CD4-positive, alpha-beta T cell (primary cell): ENCODE measurements at regions of chr6 and their contacts with region 1.

Region 1: GRCh38 chr6:143912671-143913070 is 48.4 kb downstream of the ZC2HC1B start:
- DNase-seq: no peak
- ATAC-seq: no peak
- H3K4me3 ChIP-seq: no peak overlapping the region
- H3K4me3 Mint-ChIP-seq: no peak overlapping the region
- H3K27ac ChIP-seq: no peak overlapping the region
- H3K27ac Mint-ChIP-seq: no peak overlapping the region
- H3K4me1 ChIP-seq: no peaks in the 10 kb centered on the region
- H3K4me1 Mint-ChIP-seq: no peaks in the 10 kb centered on the region
- H3K27me3 ChIP-seq: no peaks in the 10 kb centered on the region
- H3K27me3 Mint-ChIP-seq: no peaks in the 10 kb centered on the region
- CTCF ChIP-seq: no peak

Region 2: DNA sequence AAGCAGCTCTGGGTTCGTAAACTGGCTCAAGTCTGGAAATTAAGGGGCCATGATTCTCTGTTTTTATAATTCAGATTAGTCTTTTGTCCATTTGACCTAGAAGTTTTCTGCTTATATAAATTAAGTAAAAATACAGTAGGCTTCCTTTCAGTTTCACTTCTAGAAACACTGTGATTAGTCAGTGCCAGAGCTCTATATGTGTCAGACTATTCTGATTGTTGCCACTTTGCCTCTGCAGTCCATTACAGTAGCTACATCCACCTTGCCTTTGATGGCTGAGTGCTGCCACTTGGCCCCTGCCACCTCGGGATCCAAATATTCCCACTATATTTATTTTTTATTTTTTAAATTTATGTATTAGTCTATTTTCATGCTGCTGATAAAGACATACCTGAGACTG is 40.5 kb before region 1 on chr6:
- CTCF ChIA-PET with region 1: no interaction called
- POLR2A ChIA-PET with region 1: no interaction called
- intact Hi-C with region 1: no loop called
- DNase-seq: peak in 2 of 14 experiments; percentile 2 to 29
- ATAC-seq: no peak
- H3K4me3 ChIP-seq: no peak overlapping the region
- H3K4me3 Mint-ChIP-seq: no peak overlapping the region
- H3K27ac ChIP-seq: no peak overlapping the region
- H3K27ac Mint-ChIP-seq: no peak overlapping the region
- H3K4me1 ChIP-seq: no peaks in the 10 kb centered on the region
- H3K4me1 Mint-ChIP-seq: no peaks in the 10 kb centered on the region
- H3K27me3 ChIP-seq: no peaks in the 10 kb centered on the region
- H3K27me3 Mint-ChIP-seq: no peaks in the 10 kb centered on the region
- CTCF ChIP-seq: no peak

Region 3: DNA sequence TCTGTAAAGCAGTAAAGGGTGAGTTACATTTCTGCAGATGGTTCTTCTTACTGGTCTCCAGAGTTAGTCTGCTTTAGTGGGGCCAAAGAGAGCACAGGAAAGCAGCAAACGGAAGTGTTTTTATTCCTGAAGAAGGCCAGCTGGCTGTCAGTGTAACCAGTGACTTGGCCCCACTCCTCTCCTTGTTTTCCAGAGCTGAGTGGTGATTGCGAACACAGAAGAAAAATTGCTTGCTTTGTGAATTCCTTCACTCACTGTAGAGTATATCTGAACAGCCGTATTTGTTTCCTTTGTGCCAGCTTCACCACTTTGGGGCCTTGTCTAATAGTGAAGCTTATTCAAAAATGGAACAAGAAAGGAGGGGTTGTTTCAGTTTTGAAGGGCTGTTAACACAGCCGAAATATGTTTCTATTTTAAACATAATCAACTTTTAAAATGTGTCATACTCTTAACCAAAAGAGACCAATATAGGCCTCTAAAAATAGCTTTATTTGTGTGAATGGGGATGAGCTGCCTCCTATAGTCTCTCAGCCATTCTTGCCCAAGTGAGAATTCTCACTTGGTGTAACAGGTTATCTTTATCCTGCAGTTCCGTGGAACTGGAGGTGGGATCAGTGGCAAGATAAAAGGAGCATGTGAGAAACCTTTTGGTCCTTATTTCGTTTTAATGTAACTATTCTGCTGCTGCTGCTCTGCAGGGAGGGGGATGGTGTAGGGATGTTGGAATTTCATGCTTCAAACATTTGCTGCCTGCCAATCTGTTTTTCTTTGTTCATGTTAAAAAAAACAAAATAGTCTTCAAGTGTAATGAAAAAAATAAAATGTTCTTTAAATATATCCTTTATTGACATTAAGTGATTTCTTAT is 10.6 kb before region 1 on chr6:
- CTCF ChIA-PET with region 1: no interaction called
- POLR2A ChIA-PET with region 1: no interaction called
- intact Hi-C with region 1: loop called in 1 of 2 experiments (anchors 1 kb)
- DNase-seq: no peak
- ATAC-seq: no peak
- H3K4me3 ChIP-seq: no peak overlapping the region
- H3K4me3 Mint-ChIP-seq: no peak overlapping the region
- H3K27ac ChIP-seq: no peak overlapping the region
- H3K27ac Mint-ChIP-seq: no peak overlapping the region
- H3K4me1 ChIP-seq: no peaks in the 10 kb centered on the region
- H3K4me1 Mint-ChIP-seq: no peaks in the 10 kb centered on the region
- H3K27me3 ChIP-seq: no peaks in the 10 kb centered on the region
- H3K27me3 Mint-ChIP-seq: no peaks in the 10 kb centered on the region
- CTCF ChIP-seq: no peak

Region 4: GRCh38 chr6:143982968-143983367 is 70.3 kb after region 1 on chr6:
- CTCF ChIA-PET with region 1: no interaction called
- POLR2A ChIA-PET with region 1: no interaction called
- intact Hi-C with region 1: no loop called
- DNase-seq: no peak
- ATAC-seq: no peak
- H3K4me3 ChIP-seq: no peak overlapping the region
- H3K4me3 Mint-ChIP-seq: no peak overlapping the region
- H3K27ac ChIP-seq: no peak overlapping the region
- H3K27ac Mint-ChIP-seq: no peak overlapping the region
- H3K4me1 ChIP-seq: no peaks in the 10 kb centered on the region
- H3K4me1 Mint-ChIP-seq: no peaks in the 10 kb centered on the region
- H3K27me3 ChIP-seq: no peaks in the 10 kb centered on the region
- H3K27me3 Mint-ChIP-seq: no peaks in the 10 kb centered on the region
- CTCF ChIP-seq: no peak